Activated naive CD4-positive, alpha-beta T cell treated with anti-CD3 and anti-CD28 coated beads, Interleukin-2, amount 10 ng/mL, durations not matched to agents 7 days and 5 days (primary cell): ENCODE measurements at regions of chr7 and their contacts with region 1.

Region 1: GRCh38 chr7:114924038-114924712 is 2.3 kb downstream of the MDFIC start:
- DNase-seq: no peak
- H3K4me3 Mint-ChIP-seq: peak overlapping the region; percentile 99
- H3K27ac Mint-ChIP-seq: peak overlapping the region; percentile 99
- H3K4me1 Mint-ChIP-seq: peaks cover 29% of the 10 kb centered on the region
- H3K27me3 Mint-ChIP-seq: no peaks in the 10 kb centered on the region

Region 2: GRCh38 chr7:114865564-114865963 is 58.6 kb before region 1 on chr7:
- CTCF ChIA-PET with region 1: interaction called, 12 read pairs
- DNase-seq: peak; percentile 75
- H3K4me3 Mint-ChIP-seq: no peak overlapping the region
- H3K27ac Mint-ChIP-seq: no peak overlapping the region
- H3K4me1 Mint-ChIP-seq: peaks cover 7% of the 10 kb centered on the region
- H3K27me3 Mint-ChIP-seq: peaks cover 3% of the 10 kb centered on the region